GM13976 (cell line): ENCODE measurements at regions of chr5 and their contacts with region 1.

Region 1: GRCh38 chr5:140244525-140245025 is 58.3 kb downstream of the PFDN1 start:
- DNase-seq: peak; percentile 85
- CTCF ChIP-seq: peak; percentile 88

Region 2: GRCh38 chr5:139946440-139946839 is 298.1 kb before region 1 on chr5:
- in situ Hi-C with region 1: no loop called
- DNase-seq: no peak
- CTCF ChIP-seq: no peak

Region 3: GRCh38 chr5:140157032-140157803 is 87.4 kb before region 1 on chr5:
- in situ Hi-C with region 1: no loop called
- DNase-seq: peak; percentile 92
- CTCF ChIP-seq: peak; percentile 96

Region 4: GRCh38 chr5:140372971-140373487 is 128.5 kb after region 1 on chr5:
- in situ Hi-C with region 1: no loop called
- DNase-seq: peak; percentile 59
- CTCF ChIP-seq: peak; percentile 89

Region 5: GRCh38 chr5:140700177-140701144 is 455.9 kb after region 1 on chr5 and contains the start of gene ZMAT2:
- in situ Hi-C with region 1: loop called (anchors 25 kb)
- DNase-seq: peak; percentile 93
- CTCF ChIP-seq: no peak